ENCODE measurements at regions of chr2 and their contacts with region 1.

Region 1: GRCh38 chr2:203748331-203749126 is 42.1 kb downstream of the CD28 start:
- DNase-seq: no peak
- H3K4me3 ChIP-seq: no peak overlapping the region
- H3K27ac ChIP-seq: no peak overlapping the region
- H3K4me1 ChIP-seq: no peaks in the 10 kb centered on the region
- H3K27me3 ChIP-seq: no peaks in the 10 kb centered on the region
- CTCF ChIP-seq: no peak

Region 2: GRCh38 chr2:203720915-203721666 is 27.4 kb before region 1 on chr2:
- CTCF ChIA-PET with region 1: no interaction called
- POLR2A ChIA-PET with region 1: interaction called, 13 read pairs
- intact Hi-C with region 1: no loop called
- DNase-seq: no peak
- H3K4me3 ChIP-seq: no peak overlapping the region
- H3K27ac ChIP-seq: no peak overlapping the region
- H3K4me1 ChIP-seq: no peaks in the 10 kb centered on the region
- H3K27me3 ChIP-seq: no peaks in the 10 kb centered on the region
- CTCF ChIP-seq: no peak

Measured in A673 (cell line).